GM12878 (cell line): ENCODE measurements at regions of chr4 and their contacts with region 1.

Region 1: GRCh38 chr4:83582289-83582769 is 46.4 kb downstream of the GPAT3 start:
- DNase-seq: no peak
- ATAC-seq: no peak; the same call in 1 of the 3 replicates
- H3K4me3 ChIP-seq: no peak overlapping the region
- H3K27ac ChIP-seq: 0 out of 2 replicates have a peak overlapping the region, but pooled peaks have one; percentile 1
- H3K4me1 ChIP-seq: peaks cover 13% of the 10 kb centered on the region
- H3K27me3 ChIP-seq: no peaks in the 10 kb centered on the region
- CTCF ChIP-seq: peak in 2 of 3 experiments; percentile 39 to 50; a peak in 4 of 6 replicates
- EP300 ChIP-seq: no peak
- POLR2A ChIP-seq: no peak
- RAD21 ChIP-seq: peak; percentile 43

Region 2: GRCh38 chr4:83074086-83074704 is 508.1 kb before region 1 on chr4:
- CTCF ChIA-PET with region 1: no interaction called
- POLR2A ChIA-PET with region 1: no interaction called
- RAD21 ChIA-PET with region 1: no interaction called
- SMC1A ChIA-PET with region 1: no interaction called
- in situ Hi-C with region 1: no loop called
- intact Hi-C with region 1: no loop called
- DNase-seq: peak; percentile 79
- ATAC-seq: peak; percentile 95
- H3K4me3 ChIP-seq: no peak overlapping the region
- H3K27ac ChIP-seq: peak overlapping the region; percentile 7; the same call in 1 of the 2 replicates
- H3K4me1 ChIP-seq: peaks cover 8% of the 10 kb centered on the region
- H3K27me3 ChIP-seq: no peaks in the 10 kb centered on the region
- CTCF ChIP-seq: peak; percentile 74 to 78 (median 77)
- EP300 ChIP-seq: 0 out of 4 replicates have a peak, but pooled peaks of 1 of the 2 experiments have one; percentile 31
- POLR2A ChIP-seq: no peak
- RAD21 ChIP-seq: peak; percentile 92

Region 3: DNA sequence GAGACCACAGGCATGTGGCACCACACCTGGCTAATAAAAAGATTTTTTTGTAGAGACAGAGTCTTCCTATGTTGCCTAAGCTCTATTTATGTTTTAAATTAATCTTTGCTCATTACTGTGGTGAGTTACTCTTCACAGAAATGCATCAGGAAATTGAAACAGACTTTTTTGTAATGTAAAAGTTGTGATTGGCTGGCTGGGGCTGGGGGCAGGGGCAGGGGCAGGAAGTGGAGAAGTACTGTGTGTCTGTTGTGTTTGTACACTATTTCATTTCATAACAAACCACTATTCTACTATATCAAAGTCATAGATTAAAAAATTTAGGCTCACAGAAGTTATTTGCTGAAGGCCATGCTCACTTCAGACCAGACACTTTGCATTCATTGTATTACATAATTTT is 78.4 kb before region 1 on chr4:
- CTCF ChIA-PET with region 1: interaction called, 39 read pairs
- POLR2A ChIA-PET with region 1: no interaction called
- RAD21 ChIA-PET with region 1: interaction called, 5 read pairs
- SMC1A ChIA-PET with region 1: interaction called, 18 read pairs
- in situ Hi-C with region 1: no loop called
- intact Hi-C with region 1: loop called (anchors 1 kb)
- DNase-seq: no peak
- ATAC-seq: no peak
- H3K4me3 ChIP-seq: no peak overlapping the region
- H3K27ac ChIP-seq: no peak overlapping the region
- H3K4me1 ChIP-seq: no peaks in the 10 kb centered on the region
- H3K27me3 ChIP-seq: no peaks in the 10 kb centered on the region
- CTCF ChIP-seq: no peak
- EP300 ChIP-seq: no peak
- POLR2A ChIP-seq: no peak
- RAD21 ChIP-seq: no peak

Region 4: GRCh38 chr4:83510442-83510841 is 71.9 kb before region 1 on chr4:
- CTCF ChIA-PET with region 1: interaction called, 39 read pairs
- POLR2A ChIA-PET with region 1: no interaction called
- RAD21 ChIA-PET with region 1: interaction called, 5 read pairs
- SMC1A ChIA-PET with region 1: interaction called, 18 read pairs
- in situ Hi-C with region 1: no loop called
- intact Hi-C with region 1: loop called (anchors 1 kb)
- DNase-seq: no peak
- ATAC-seq: peak; percentile 79
- H3K4me3 ChIP-seq: no peak overlapping the region
- H3K27ac ChIP-seq: no peak overlapping the region
- H3K4me1 ChIP-seq: no peaks in the 10 kb centered on the region
- H3K27me3 ChIP-seq: no peaks in the 10 kb centered on the region
- CTCF ChIP-seq: no peak
- EP300 ChIP-seq: peak in 1 of 2 experiments; percentile 32; a peak in 1 of 4 replicates
- POLR2A ChIP-seq: no peak
- RAD21 ChIP-seq: no peak

Region 5: GRCh38 chr4:83548151-83548905 is 34.0 kb before region 1 on chr4:
- CTCF ChIA-PET with region 1: interaction called, 3 read pairs
- POLR2A ChIA-PET with region 1: no interaction called
- RAD21 ChIA-PET with region 1: interaction called, 5 read pairs
- SMC1A ChIA-PET with region 1: interaction called, 3 read pairs
- in situ Hi-C with region 1: no loop called
- intact Hi-C with region 1: loop called (anchors 2 kb)
- DNase-seq: peak; percentile 83
- ATAC-seq: peak; percentile 92
- H3K4me3 ChIP-seq: no peak overlapping the region
- H3K27ac ChIP-seq: peak overlapping the region; percentile 39; the same call in 1 of the 2 replicates
- H3K4me1 ChIP-seq: peaks cover 15% of the 10 kb centered on the region
- H3K27me3 ChIP-seq: no peaks in the 10 kb centered on the region
- CTCF ChIP-seq: no peak
- EP300 ChIP-seq: peak; percentile 55 to 84; a peak in 3 of 4 replicates
- POLR2A ChIP-seq: no peak
- RAD21 ChIP-seq: no peak

Region 6: DNA sequence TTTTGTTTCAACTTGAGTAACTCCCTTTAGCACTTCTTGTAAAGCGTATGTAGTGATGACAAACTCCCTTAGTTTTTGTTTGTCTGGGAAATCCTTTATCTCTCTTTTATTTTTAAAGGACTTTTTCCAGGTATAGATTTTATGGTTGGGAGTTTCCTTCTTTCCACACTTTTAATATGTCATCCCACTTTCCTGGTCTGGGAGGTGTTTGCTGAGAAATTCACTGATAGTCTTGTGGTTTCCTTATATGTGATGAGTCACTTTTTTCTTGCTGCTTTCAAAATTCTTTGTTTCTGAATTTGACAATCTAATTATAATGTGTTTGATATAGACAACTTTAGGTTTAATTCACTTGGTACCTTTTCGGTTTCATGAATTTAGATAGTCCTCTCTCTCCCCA is 307.5 kb after region 1 on chr4:
- CTCF ChIA-PET with region 1: no interaction called
- POLR2A ChIA-PET with region 1: no interaction called
- RAD21 ChIA-PET with region 1: no interaction called
- SMC1A ChIA-PET with region 1: no interaction called
- in situ Hi-C with region 1: no loop called
- intact Hi-C with region 1: no loop called
- DNase-seq: no peak
- ATAC-seq: no peak
- H3K4me3 ChIP-seq: no peak overlapping the region
- H3K27ac ChIP-seq: no peak overlapping the region
- H3K4me1 ChIP-seq: no peaks in the 10 kb centered on the region
- H3K27me3 ChIP-seq: no peaks in the 10 kb centered on the region; a peak in 1 of 4 replicates
- CTCF ChIP-seq: no peak
- EP300 ChIP-seq: no peak
- POLR2A ChIP-seq: no peak
- RAD21 ChIP-seq: no peak